ENCODE measurements at regions of chr2 and their contacts with region 1.

Region 1: DNA sequence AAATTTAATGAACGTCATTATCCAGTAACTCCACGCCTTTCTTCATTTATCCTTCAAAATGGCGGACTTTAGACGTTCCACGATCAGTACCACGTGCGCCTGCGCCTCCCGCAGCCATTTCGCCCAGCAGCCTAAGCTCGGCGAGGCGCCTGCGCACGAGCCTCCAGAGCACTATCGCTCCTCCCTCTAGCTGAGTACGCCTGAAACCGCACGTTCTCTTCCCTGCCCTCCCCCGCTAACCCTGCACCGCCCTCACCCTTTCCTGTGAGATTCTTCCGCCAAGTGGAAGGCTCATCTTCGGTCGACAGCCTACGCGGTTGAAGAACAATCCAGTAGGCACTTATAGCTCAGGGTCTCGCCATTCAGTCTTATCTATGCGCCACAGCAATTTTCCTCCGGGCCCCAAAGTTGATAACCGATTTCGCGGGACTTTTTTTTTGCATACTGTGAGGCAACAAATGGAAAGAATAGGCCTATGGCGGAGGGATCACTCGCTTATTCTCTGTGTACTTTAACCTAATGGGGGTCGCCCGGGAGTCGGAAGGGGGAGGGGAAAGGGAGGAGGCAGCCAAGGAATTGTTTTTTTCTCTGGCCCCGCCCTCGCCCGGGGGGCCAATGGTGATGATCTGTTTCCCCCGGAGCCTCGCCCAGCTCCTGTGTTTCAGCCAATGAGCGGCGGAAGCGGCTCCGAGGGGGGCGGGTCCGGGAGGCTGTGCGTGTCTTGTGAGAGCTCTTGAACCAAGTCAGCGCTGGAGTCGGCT is at the start of gene KDM3A:
- DNase-seq: peak; percentile 100
- H3K4me3 Mint-ChIP-seq: peak within 1 kb of the TSS; percentile 92
- H3K27ac Mint-ChIP-seq: peak within 1 kb of the TSS; percentile 100
- H3K4me1 Mint-ChIP-seq: peaks cover 37% of the 10 kb centered on the region
- H3K27me3 Mint-ChIP-seq: no peaks in the 10 kb centered on the region
- total RNA-seq, gene KDM3A: 47.3 to 49.9 TPM

Region 2: DNA sequence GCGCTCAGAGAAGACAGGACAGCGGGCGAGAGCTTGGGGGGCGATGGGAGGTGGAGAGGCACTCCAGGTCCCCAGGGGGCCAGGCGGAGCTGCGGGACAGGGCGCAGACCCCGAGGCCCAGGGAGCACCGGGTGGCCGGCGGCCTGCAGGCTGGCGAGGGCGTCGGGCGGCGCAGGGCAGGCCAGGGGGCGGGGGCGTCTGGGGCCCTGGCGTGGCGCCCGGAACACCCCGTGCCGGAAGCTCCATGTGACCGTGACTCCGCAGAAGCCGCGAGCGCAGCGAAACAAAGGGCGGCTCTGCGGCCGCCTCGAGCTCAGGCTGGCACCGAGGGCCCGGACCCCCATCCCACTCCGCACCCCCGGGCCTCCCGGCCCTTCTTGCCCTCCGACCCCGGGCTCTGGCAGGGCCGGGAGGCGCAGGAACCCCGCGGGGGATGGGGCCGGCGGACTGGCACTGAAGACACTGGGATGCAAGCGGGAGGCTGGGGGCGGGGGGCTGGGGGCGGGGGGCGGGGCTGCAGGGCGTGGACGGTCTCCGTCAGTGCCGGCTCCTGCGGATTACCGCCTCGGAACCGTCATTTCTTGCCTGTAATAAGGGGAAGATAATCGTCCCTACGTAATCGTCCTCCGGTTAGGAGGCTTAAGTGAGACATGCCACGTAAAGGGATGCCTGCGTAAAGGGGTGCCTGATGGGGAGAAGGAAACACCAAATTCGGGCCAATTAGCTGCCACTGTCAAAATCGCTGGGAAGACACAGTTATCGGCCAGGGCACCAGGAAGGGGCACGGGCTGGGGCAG is 1003.1 kb before region 1 on chr2:
- CTCF ChIA-PET with region 1: no interaction called
- intact Hi-C with region 1: loop called (anchors 5 kb)
- DNase-seq: peak; percentile 87
- H3K4me3 Mint-ChIP-seq: peak overlapping the region; percentile 77
- H3K27ac Mint-ChIP-seq: peak overlapping the region; percentile 89
- H3K4me1 Mint-ChIP-seq: peaks cover 26% of the 10 kb centered on the region
- H3K27me3 Mint-ChIP-seq: no peaks in the 10 kb centered on the region

Region 3: GRCh38 chr2:86035883-86036668 is 404.7 kb before region 1 on chr2:
- CTCF ChIA-PET with region 1: no interaction called
- intact Hi-C with region 1: loop called (anchors 1 kb)
- DNase-seq: peak; percentile 74
- H3K4me3 Mint-ChIP-seq: peak overlapping the region; percentile 58
- H3K27ac Mint-ChIP-seq: peak overlapping the region; percentile 95
- H3K4me1 Mint-ChIP-seq: peaks cover 81% of the 10 kb centered on the region
- H3K27me3 Mint-ChIP-seq: no peaks in the 10 kb centered on the region

Region 4: DNA sequence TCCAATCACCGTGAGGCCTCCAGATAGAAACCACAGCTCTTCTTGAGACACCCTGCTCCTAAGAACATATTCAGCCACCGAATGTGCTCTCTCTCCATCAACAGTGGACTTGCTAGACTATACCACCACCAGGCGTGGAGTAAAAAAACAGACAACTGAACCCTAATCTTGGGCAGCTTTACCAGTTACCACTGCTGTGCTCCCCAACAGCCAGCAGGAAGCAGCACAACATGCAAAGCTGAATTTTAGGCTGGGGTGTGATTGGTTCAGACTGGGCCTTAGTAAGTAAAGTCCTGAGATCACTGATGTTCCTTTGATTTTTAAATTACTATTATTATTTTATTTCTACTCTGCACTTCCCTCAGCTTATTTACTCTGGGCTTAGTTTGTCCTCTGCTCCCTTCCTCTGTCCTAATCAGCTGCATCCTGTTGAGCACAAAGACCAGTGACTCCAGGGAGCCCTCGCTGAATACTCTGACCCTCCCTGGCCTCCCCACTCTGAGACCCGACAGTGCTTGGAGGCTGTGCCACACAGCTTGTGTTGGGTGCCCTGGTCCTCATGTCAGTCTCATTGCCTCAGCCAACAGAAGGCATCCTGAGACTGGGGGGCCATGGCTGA is 219.6 kb before region 1 on chr2:
- CTCF ChIA-PET with region 1: interaction called, 6 read pairs
- intact Hi-C with region 1: loop called (anchors 1 kb)
- DNase-seq: peak; percentile 80
- H3K4me3 Mint-ChIP-seq: no peak overlapping the region
- H3K27ac Mint-ChIP-seq: no peak overlapping the region
- H3K4me1 Mint-ChIP-seq: peaks cover 16% of the 10 kb centered on the region
- H3K27me3 Mint-ChIP-seq: no peaks in the 10 kb centered on the region

Region 5: GRCh38 chr2:86468162-86469033 is 27.6 kb after region 1 on chr2:
- CTCF ChIA-PET with region 1: interaction called, 4 read pairs
- intact Hi-C with region 1: loop called (anchors 1 kb)
- DNase-seq: peak; percentile 45
- H3K4me3 Mint-ChIP-seq: peak overlapping the region; percentile 40
- H3K27ac Mint-ChIP-seq: peak overlapping the region; percentile 80
- H3K4me1 Mint-ChIP-seq: peaks cover 56% of the 10 kb centered on the region
- H3K27me3 Mint-ChIP-seq: no peaks in the 10 kb centered on the region

Region 6: DNA sequence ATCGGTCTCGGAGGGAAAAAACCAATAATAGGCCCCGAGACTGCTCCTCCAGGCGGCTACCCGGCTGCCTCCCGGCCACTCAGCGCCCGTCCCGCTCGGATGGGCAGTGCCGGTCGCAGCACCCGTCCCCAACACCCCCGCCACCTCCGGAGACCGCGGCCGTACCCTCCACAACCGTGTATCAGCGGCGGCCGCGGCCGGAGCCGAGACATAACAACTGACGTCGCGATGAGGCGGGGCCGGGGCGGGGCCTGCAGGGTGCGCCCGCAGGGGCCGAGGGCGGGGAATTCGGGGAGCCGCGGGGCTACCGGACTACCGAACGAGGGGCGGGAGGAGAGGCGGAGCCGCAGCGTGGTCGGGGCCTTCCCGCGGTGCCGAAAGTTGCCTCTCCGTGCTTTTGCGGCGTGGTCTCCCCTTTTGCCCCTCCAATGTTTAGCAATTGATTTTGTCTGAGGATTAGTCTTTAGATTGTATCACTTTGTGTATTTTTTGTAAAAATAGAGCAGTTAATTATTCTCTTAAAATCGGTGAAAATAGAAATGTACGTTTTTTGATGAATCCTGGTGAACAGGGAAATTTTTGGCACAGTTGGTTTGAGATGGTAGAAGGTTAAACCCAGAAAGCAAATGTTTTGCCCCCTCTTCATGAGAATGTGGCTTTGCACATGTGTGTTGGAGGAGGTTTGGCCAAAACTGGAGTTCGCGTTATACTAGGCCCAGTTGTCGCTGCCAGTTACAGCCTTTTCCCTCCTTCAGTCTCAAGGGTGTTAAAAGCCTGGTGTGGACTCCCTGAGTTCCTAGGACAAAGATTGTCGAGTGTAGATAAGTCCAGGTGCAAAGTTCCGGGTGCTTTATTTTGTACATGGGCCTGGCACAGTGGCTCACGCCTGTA is 183.1 kb after region 1 on chr2 and contains the start of gene RNF103:
- CTCF ChIA-PET with region 1: no interaction called
- intact Hi-C with region 1: loop called (anchors 1 kb)
- DNase-seq: peak; percentile 94
- H3K4me3 Mint-ChIP-seq: peak within 1 kb of the TSS; percentile 92
- H3K27ac Mint-ChIP-seq: peak within 1 kb of the TSS; percentile 93
- H3K4me1 Mint-ChIP-seq: peaks cover 18% of the 10 kb centered on the region
- H3K27me3 Mint-ChIP-seq: peaks cover 4% of the 10 kb centered on the region
- total RNA-seq, gene RNF103: 10.7 to 11.8 TPM

Measured in activated naive CD4-positive, alpha-beta T cell treated with anti-CD3 and anti-CD28 coated beads for 36 hours (primary cell).